ENCODE measurements at regions of chr4 and their contacts with region 1.

Region 1: DNA sequence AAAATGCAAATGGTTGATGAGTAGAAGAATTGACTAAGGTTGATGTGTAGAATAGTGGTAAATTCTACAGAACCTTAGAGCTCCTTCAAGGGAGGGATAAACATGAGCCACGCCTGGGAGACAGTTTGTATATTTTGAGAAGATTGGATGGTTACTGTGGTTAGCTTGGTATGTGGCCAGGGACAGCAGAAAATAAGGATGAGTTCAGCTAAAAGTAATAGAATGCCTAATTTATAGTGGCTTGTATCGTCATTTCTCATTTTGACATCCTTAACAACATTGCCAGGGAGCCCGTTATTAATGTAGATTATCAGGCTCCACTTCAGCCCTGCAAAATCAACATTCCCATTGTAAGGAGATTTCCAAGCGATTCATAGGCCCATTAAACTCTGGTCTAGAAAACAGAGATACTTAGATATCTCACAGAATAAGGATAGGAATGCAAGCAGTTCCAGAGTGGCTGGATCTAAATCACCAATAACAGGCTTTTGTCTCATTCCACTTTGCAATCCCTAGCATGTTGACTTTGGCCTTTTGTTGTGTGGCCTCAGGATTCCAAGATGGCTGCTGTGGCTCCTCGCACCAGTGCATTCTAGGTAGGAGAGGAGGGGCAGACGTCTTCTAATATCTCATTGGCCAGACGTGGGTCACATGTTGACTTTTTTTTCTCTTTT is 6.4 kb upstream of the PTTG2 start:
- DNase-seq: no peak
- H3K4me3 Mint-ChIP-seq: no peak overlapping the region
- H3K27ac Mint-ChIP-seq: no peak overlapping the region
- H3K4me1 Mint-ChIP-seq: peaks cover 12% of the 10 kb centered on the region
- H3K27me3 Mint-ChIP-seq: no peaks in the 10 kb centered on the region

Region 2: GRCh38 chr4:37928426-37929416 is 25.0 kb before region 1 on chr4:
- intact Hi-C with region 1: loop called (anchors 1 kb)
- DNase-seq: no peak
- H3K4me3 Mint-ChIP-seq: no peak overlapping the region
- H3K27ac Mint-ChIP-seq: peak overlapping the region; percentile 7
- H3K4me1 Mint-ChIP-seq: peaks cover 32% of the 10 kb centered on the region
- H3K27me3 Mint-ChIP-seq: no peaks in the 10 kb centered on the region